H1 (cell line): ENCODE measurements at regions of chr10 and their contacts with region 1.

Region 1: GRCh38 chr10:113385021-113385999 is 167.5 kb upstream of the HABP2 start:
- DNase-seq: peak; percentile 65 to 71
- H3K4me3 ChIP-seq: no peak overlapping the region
- H3K27ac ChIP-seq: no peak overlapping the region
- H3K4me1 ChIP-seq: no peaks in the 10 kb centered on the region
- H3K27me3 ChIP-seq: no peaks in the 10 kb centered on the region
- CTCF ChIP-seq: peak; percentile 80 to 93 (median 86)
- EP300 ChIP-seq: no peak
- POLR2A ChIP-seq: no peak
- RAD21 ChIP-seq: peak; percentile 98 to 99

Region 2: GRCh38 chr10:113216102-113216501 is 169.2 kb before region 1 on chr10:
- CTCF ChIA-PET with region 1: interaction called, 32 read pairs
- POLR2A ChIA-PET with region 1: no interaction called
- DNase-seq: no peak
- H3K4me3 ChIP-seq: no peak overlapping the region
- H3K27ac ChIP-seq: no peak overlapping the region
- H3K4me1 ChIP-seq: no peaks in the 10 kb centered on the region; a peak in 1 of 7 replicates
- H3K27me3 ChIP-seq: no peaks in the 10 kb centered on the region
- CTCF ChIP-seq: peak in 2 of 3 experiments; percentile 42 to 65; a peak in 3 of 4 replicates
- EP300 ChIP-seq: no peak
- POLR2A ChIP-seq: no peak
- RAD21 ChIP-seq: peak; percentile 75 to 80

Region 3: DNA sequence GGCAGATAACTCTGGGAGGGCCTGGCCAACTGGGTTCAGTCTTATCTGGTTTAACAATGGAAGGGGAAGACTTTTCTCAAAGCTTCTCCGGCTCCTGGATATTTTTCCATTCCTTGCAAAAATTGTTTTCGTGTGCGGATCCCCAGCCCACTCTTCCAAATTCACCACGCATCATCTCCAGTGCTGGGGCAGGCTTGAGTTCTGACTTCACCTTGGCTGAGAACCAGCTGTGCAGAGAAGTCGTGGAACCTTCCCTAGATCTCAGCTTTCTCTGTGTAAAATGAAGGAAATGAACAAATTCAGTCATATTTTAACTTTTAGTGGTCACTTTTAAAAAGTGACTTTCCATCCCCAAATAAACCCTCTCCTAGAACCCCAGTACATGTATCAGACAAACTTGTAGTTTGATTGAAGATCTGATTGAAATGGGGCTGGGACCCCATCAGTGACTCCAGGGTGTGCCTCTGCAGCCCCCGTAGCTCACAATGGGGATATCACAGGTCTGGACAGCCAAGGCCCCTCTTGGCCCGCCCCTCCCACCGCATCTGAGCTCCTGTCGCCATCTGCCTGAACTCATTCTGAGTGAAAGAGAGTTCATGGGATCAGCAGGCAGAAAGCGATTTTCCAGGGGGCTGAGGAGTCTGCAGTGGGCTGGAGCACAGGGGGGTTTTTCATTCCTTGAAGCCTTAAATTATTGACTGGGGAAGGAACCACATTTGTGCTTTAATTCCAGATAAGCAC is 138.1 kb before region 1 on chr10:
- CTCF ChIA-PET with region 1: interaction called, 11 read pairs
- POLR2A ChIA-PET with region 1: no interaction called
- DNase-seq: no peak
- H3K4me3 ChIP-seq: no peak overlapping the region
- H3K27ac ChIP-seq: no peak overlapping the region
- H3K4me1 ChIP-seq: no peaks in the 10 kb centered on the region; a peak in 1 of 7 replicates
- H3K27me3 ChIP-seq: no peaks in the 10 kb centered on the region
- CTCF ChIP-seq: no peak
- EP300 ChIP-seq: no peak
- POLR2A ChIP-seq: no peak
- RAD21 ChIP-seq: no peak

Region 4: GRCh38 chr10:113368666-113369364 is 16.5 kb before region 1 on chr10:
- CTCF ChIA-PET with region 1: interaction called, 17 read pairs
- POLR2A ChIA-PET with region 1: no interaction called
- DNase-seq: no peak
- H3K4me3 ChIP-seq: no peak overlapping the region
- H3K27ac ChIP-seq: no peak overlapping the region
- H3K4me1 ChIP-seq: no peaks in the 10 kb centered on the region
- H3K27me3 ChIP-seq: peaks cover 0 to 4% (median 0%) of the 10 kb centered on the region in 4 experiments; a peak in 2 of 7 replicates
- CTCF ChIP-seq: no peak
- EP300 ChIP-seq: no peak
- POLR2A ChIP-seq: no peak
- RAD21 ChIP-seq: no peak